ENCODE measurements at regions of chr7 and their contacts with region 1.

Region 1: DNA sequence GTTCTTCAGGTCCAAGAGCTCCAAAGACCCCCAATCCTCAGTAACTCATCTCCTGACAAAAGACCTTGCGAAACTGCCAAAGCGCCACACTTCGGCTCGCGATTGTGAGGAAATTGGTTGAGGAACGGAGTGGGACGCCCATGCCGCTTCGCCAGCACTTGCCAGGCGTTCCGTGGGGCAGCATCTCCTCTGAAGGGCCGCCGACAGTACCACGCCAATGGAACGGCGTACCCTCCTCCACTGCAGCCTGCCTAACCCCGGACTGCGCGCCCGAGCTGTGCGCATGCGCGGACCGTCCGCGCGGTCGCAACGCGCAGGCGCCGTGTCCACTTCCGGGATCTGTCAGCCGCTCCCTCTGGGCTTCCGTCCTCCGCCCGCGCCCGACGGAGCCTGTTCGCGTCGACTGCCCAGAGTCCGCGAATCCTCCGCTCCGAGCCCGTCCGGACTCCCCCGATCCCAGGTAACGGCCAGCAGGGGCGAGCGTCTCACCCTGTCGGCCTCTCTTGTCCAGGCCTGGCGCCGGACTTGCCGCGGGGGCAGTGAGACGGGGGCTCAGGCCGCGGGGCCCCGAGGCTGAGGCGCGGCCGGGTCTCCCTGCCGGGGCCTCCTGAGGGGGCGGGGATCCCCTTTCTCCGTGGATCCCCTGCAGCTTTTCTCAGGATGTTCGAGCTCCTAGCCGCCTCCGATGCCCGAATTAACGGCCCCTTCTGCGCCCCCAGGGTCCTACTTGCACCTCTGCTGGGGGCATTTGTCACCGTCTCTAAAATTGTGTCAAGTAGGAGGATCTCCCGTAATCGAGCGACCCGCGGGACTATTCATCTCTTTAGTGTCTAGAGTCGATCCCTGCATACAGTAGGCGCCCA is at the start of gene ARPC1A:
- DNase-seq: peak; percentile 97 to 100 (median 100)
- ATAC-seq: peak; percentile 93
- H3K4me3 ChIP-seq: peak within 1 kb of the TSS; percentile 85
- H3K27ac ChIP-seq: peak within 1 kb of the TSS; percentile 84
- H3K4me1 ChIP-seq: peaks cover 31 to 33% of the 10 kb centered on the region in 2 experiments
- H3K27me3 ChIP-seq: no peaks in the 10 kb centered on the region
- CTCF ChIP-seq: peak; percentile 44 to 63 (median 45)
- EP300 ChIP-seq: no peak
- POLR2A ChIP-seq: peak; percentile 97
- RAD21 ChIP-seq: peak in 1 of 2 experiments; percentile 6; a peak in 1 of 4 replicates
- polyA plus RNA-seq, gene ARPC1A: 130 to 151 TPM

Region 2: DNA sequence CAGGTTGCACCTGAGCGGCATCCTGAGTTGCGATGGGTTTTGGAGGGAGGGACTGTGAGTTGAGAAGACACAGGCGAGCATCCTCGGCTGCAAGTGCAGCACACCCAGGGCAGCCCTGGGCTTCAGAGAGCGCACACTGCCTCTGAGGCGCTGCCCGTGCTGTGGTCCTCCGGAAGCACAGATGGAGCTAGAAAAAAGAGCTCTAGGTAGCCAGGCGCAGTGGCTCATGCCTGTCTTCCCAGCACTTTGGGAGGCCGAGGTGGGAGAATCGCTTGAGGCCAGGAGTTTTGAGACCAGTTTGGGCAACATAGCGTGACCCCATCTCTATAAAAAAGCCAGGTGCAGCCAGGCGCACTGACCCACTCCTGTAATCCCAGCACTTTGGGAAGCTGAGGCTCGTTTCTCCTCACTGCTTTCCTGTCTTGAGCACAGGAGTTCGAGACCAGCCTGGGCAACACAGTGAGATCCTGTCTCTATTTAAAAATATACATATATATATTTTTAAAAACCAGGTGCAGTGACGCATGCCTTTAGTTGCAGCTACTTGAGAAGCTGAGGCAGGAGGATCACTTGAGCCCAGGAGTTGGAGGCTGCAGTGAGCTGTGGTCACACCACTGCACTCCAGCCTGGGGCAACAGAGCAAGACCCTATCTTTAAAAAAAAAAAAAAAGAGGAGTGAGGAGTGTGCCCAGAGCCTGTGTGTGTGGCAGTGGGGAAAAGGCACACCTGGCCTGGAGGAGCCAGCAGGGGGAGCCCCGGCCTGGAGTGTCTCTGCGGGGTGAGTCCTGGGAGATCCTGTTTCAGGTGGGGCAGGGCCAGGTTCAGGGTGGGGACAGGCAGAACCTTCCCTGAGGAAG is 39.4 kb after region 1 on chr7:
- CTCF ChIA-PET with region 1: no interaction called
- POLR2A ChIA-PET with region 1: interaction called, 6 read pairs
- in situ Hi-C with region 1: no loop called
- intact Hi-C with region 1: loop called (anchors 5 kb)
- DNase-seq: peak; percentile 75 to 82 (median 79)
- ATAC-seq: peak; percentile 89
- H3K4me3 ChIP-seq: no peak overlapping the region
- H3K27ac ChIP-seq: 0 out of 3 replicates have a peak overlapping the region, but pooled peaks have one; percentile 12
- H3K4me1 ChIP-seq: peaks cover 23 to 33% of the 10 kb centered on the region in 2 experiments
- H3K27me3 ChIP-seq: no peaks in the 10 kb centered on the region
- CTCF ChIP-seq: peak; percentile 77 to 83 (median 78)
- EP300 ChIP-seq: no peak
- POLR2A ChIP-seq: no peak
- RAD21 ChIP-seq: peak; percentile 35 to 75